CD8-positive, alpha-beta T cell (primary cell): ENCODE measurements at regions of chr17 and their contacts with region 1.

Region 1: GRCh38 chr17:76408052-76408849 is 23.8 kb downstream of the SPHK1 start:
- DNase-seq: peak; percentile 53 to 81 (median 75)
- ATAC-seq: peak; percentile 92
- H3K4me3 ChIP-seq: no peak overlapping the region
- H3K4me3 Mint-ChIP-seq: no peak overlapping the region
- H3K27ac ChIP-seq: no peak overlapping the region
- H3K27ac Mint-ChIP-seq: peak overlapping the region; percentile 70
- H3K4me1 ChIP-seq: peaks cover 4% of the 10 kb centered on the region
- H3K4me1 Mint-ChIP-seq: peaks cover 9% of the 10 kb centered on the region
- H3K27me3 ChIP-seq: no peaks in the 10 kb centered on the region
- H3K27me3 Mint-ChIP-seq: no peaks in the 10 kb centered on the region
- CTCF ChIP-seq: peak; percentile 87

Region 2: DNA sequence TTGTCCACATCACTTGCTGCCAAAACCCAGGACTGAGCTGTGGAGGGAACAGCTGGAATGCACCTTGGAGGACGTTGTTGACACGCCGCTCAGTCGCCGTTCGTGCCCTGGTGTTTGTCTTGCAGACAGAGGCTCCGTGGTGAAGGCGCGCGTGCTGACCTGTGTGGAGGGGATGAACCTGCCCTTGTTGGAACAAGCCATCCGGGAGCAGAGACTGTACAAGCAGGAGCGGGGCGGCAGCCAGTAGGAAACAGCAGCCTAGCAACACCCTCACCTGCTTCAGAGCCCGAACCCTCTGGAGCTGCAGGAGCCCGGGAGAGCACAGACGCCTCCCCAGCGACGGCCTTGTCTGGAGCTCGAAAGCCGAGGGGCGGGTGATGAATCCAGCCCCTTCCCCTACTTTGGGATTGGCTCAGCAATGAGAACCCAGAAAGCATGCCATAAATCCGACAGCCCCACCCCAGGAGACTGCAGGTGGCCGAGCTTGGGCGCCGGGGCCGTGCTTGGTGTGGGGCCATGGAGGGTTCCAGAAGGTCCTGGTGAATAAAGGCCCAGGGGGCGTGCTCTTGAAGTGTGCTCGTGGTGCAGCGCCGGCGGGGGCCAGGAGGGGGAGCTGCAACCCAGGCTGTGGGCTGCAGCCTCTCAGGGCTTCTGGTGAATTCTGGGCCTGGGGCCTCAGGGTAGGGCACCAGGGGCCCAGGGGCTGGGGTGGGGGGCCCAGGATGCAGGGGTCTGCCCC is 408.1 kb before region 1 on chr17:
- CTCF ChIA-PET with region 1: no interaction called
- POLR2A ChIA-PET with region 1: no interaction called
- intact Hi-C with region 1: loop called in 1 of 2 experiments (anchors 5 kb)
- DNase-seq: peak; percentile 41 to 76 (median 59)
- ATAC-seq: peak; percentile 90
- H3K4me3 ChIP-seq: no peak overlapping the region
- H3K4me3 Mint-ChIP-seq: no peak overlapping the region
- H3K27ac ChIP-seq: no peak overlapping the region
- H3K27ac Mint-ChIP-seq: no peak overlapping the region
- H3K4me1 ChIP-seq: peaks cover 13% of the 10 kb centered on the region
- H3K4me1 Mint-ChIP-seq: peaks cover 11% of the 10 kb centered on the region
- H3K27me3 ChIP-seq: no peaks in the 10 kb centered on the region
- H3K27me3 Mint-ChIP-seq: no peaks in the 10 kb centered on the region
- CTCF ChIP-seq: peak; percentile 81

Region 3: GRCh38 chr17:76370261-76370993 is 37.8 kb before region 1 on chr17:
- CTCF ChIA-PET with region 1: no interaction called
- POLR2A ChIA-PET with region 1: no interaction called
- intact Hi-C with region 1: no loop called
- DNase-seq: no peak
- ATAC-seq: no peak
- H3K4me3 ChIP-seq: no peak overlapping the region
- H3K4me3 Mint-ChIP-seq: no peak overlapping the region
- H3K27ac ChIP-seq: no peak overlapping the region
- H3K27ac Mint-ChIP-seq: no peak overlapping the region
- H3K4me1 ChIP-seq: no peaks in the 10 kb centered on the region
- H3K4me1 Mint-ChIP-seq: no peaks in the 10 kb centered on the region
- H3K27me3 ChIP-seq: no peaks in the 10 kb centered on the region
- H3K27me3 Mint-ChIP-seq: no peaks in the 10 kb centered on the region
- CTCF ChIP-seq: no peak

Region 4: DNA sequence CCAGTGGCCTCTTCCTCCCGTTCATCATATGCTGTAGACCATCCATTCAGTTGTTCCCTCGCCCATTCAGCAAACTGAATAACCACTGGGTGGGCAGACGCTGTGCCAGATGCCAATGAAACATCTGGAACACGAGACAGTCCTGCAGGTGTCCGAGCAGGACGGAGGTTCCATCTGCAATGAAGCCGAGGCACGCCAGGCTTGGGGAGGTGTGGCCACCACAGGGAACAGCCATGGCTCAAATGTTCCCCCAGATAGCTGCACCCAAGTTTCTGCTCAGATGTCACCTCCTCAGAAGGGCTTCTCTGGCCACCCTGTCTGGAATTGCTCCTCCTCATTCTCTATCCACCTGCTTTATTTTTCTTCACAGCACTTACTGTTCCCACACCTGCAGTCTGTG is 14.2 kb after region 1 on chr17:
- CTCF ChIA-PET with region 1: interaction called, 19 read pairs
- POLR2A ChIA-PET with region 1: no interaction called
- intact Hi-C with region 1: no loop called
- DNase-seq: no peak
- ATAC-seq: no peak
- H3K4me3 ChIP-seq: no peak overlapping the region
- H3K4me3 Mint-ChIP-seq: no peak overlapping the region
- H3K27ac ChIP-seq: no peak overlapping the region
- H3K27ac Mint-ChIP-seq: no peak overlapping the region
- H3K4me1 ChIP-seq: no peaks in the 10 kb centered on the region
- H3K4me1 Mint-ChIP-seq: peaks cover 24% of the 10 kb centered on the region
- H3K27me3 ChIP-seq: no peaks in the 10 kb centered on the region
- H3K27me3 Mint-ChIP-seq: no peaks in the 10 kb centered on the region
- CTCF ChIP-seq: no peak

Region 5: GRCh38 chr17:76467366-76467765 is 59.1 kb after region 1 on chr17 and contains the start of gene AANAT:
- CTCF ChIA-PET with region 1: interaction called, 6 read pairs
- POLR2A ChIA-PET with region 1: no interaction called
- intact Hi-C with region 1: loop called (anchors 1 to 5 kb)
- DNase-seq: no peak
- ATAC-seq: no peak
- H3K4me3 ChIP-seq: no peak within 1 kb of the TSS
- H3K4me3 Mint-ChIP-seq: no peak within 1 kb of the TSS
- H3K27ac ChIP-seq: no peak within 1 kb of the TSS
- H3K27ac Mint-ChIP-seq: no peak within 1 kb of the TSS
- H3K4me1 ChIP-seq: peaks cover 3% of the 10 kb centered on the region
- H3K4me1 Mint-ChIP-seq: peaks cover 4% of the 10 kb centered on the region
- H3K27me3 ChIP-seq: no peaks in the 10 kb centered on the region
- H3K27me3 Mint-ChIP-seq: no peaks in the 10 kb centered on the region
- CTCF ChIP-seq: no peak
- total RNA-seq, gene AANAT: not detected

Region 6: DNA sequence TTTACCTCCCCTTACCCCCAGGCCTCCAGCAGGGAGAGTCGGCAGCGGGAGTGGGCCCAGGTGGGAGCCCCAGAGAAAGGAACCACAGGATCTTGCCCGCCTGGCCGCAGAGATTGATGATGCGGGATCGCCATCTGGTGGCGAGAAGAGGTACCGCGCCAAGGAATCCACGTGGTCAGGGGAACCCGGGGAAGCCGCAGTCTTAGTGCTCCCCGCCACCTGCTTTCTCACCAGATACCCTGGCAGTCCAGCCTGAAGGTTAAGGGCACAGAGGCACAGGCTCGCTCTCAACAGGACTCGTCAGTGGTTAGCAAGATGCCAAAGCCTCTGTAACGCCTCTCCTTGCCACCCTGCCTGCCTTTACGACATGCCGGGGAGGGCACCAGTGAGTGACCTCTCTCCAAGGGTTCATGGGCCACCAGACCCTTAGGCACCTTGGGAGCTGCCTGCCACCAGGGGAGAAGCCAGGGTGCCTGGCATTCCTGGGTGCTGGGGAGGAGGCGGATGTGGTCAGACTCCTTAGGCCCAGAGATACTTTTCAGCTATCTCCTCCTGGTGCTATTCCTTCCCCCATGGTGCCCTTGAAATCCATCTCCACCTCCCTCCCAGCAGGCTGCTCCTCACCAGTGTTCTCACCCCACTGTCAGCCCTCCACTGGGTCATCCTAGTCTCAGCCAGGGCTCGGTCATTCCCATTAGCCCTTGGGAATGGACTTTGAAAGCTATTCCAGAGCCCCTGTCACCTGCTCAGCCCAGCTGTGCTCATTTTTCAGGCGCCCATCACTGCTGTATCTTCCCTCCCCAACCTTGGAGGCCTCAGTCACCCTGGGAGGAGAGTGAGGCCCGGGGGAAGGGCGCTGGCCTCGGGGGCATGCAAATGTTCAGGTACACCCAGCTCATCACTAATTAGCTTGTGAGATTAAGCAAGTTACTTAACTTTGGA is 98.4 kb after region 1 on chr17:
- CTCF ChIA-PET with region 1: interaction called, 96 read pairs
- POLR2A ChIA-PET with region 1: no interaction called
- intact Hi-C with region 1: loop called (anchors 1 kb)
- DNase-seq: peak; percentile 80 to 96 (median 90)
- ATAC-seq: peak; percentile 84
- H3K4me3 ChIP-seq: no peak overlapping the region
- H3K4me3 Mint-ChIP-seq: no peak overlapping the region
- H3K27ac ChIP-seq: no peak overlapping the region
- H3K27ac Mint-ChIP-seq: peak overlapping the region; percentile 22
- H3K4me1 ChIP-seq: peaks cover 19% of the 10 kb centered on the region
- H3K4me1 Mint-ChIP-seq: peaks cover 24% of the 10 kb centered on the region
- H3K27me3 ChIP-seq: no peaks in the 10 kb centered on the region
- H3K27me3 Mint-ChIP-seq: no peaks in the 10 kb centered on the region
- CTCF ChIP-seq: peak; percentile 93